ENCODE measurements at regions of chr6 and their contacts with region 1.

Region 1: DNA sequence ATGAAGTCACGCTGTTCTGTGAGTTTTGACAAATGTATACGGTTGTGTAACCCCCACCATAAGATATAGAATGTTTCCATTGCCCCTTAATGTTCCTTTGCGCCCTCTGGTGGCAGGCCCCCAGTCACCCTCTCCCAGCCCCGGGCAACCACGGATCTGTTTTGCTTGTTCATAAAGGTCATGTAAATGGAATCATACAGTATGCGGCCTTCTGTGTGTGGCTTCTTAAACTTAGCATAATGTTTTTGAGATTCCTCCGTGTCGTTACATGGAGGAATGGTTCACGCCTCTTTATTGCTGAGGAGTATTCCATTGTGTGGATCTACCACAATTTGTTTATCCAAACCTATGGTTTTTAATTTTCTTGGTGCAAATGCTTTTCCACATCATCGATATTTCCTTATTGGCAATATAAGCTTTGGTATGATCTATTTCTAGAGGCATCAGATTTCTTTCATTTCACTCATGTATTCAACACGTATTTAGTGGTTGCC is 28.4 kb downstream of the LYRM2 start:
- DNase-seq: peak; percentile 71
- ATAC-seq: peak; percentile 41 to 81

Region 2: DNA sequence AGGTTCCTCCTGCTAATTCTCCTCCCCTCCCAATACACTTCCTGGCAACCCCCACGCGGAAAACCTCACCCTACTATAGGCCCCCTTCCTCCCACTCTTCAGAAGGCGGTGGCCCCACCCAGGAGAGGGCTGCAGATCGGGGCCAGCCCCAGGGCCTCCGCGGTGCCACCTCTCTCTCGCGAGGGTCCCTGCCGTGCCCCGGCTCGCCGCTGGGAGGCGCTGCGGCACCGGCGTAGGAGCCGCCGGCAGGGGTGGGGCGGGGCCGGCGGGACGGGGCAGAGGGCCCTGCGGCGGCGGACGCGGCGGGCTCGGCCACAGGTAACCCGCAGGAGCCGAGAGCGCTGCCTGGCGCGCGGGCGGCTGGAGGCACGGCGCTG is 177.3 kb before region 1 on chr6 and contains the start of gene ANKRD6:
- intact Hi-C with region 1: loop called (anchors 1 to 5 kb)
- DNase-seq: peak; percentile 84
- ATAC-seq: peak; percentile 97
- total RNA-seq, gene ANKRD6: 9.1 to 13.7 TPM

Measured in left cardiac atrium (tissue), 4 donors.